ENCODE measurements at regions of chr5 and their contacts with region 1.

Region 1: GRCh38 chr5:127785098-127785927 is 82.1 kb downstream of the CCDC192 start:
- DNase-seq: peak; percentile 46
- H3K4me3 Mint-ChIP-seq: no peak overlapping the region
- H3K27ac Mint-ChIP-seq: peak overlapping the region; percentile 87
- H3K4me1 Mint-ChIP-seq: peaks cover 19% of the 10 kb centered on the region
- H3K27me3 Mint-ChIP-seq: peaks cover 12% of the 10 kb centered on the region

Region 2: DNA sequence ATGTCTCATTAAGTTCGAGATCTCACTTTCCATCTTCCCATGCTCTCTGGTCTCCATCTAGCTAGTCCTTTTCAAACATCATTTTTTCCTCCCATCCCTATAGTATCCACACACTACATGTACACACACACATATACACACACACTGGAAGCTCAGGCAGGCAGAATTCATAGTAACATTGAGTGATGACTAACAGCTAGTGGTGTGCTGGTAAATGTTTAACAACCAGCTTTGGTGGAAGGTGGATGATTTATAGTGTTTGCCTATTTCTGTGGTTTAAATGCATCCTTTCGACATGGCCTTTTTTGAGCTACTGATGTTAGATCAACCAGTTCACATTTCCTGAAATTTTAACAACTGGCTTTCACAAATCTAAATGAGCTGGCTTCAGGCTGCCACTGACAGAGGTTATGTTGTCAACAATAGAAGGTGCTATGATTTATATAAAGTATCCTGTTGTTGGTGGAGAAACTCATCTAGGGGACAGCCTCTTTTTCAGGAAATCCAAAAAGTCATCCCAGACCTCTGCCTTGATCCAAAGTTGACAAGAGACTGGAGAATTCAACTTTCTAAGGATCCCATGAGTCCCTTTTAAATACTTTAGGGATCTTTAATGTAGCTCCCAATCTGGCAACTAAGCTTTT is 35.7 kb after region 1 on chr5:
- CTCF ChIA-PET with region 1: no interaction called
- POLR2A ChIA-PET with region 1: no interaction called
- intact Hi-C with region 1: loop called (anchors 1 kb)
- DNase-seq: no peak
- H3K4me3 Mint-ChIP-seq: no peak overlapping the region
- H3K27ac Mint-ChIP-seq: no peak overlapping the region
- H3K4me1 Mint-ChIP-seq: no peaks in the 10 kb centered on the region
- H3K27me3 Mint-ChIP-seq: peaks cover 3% of the 10 kb centered on the region

Region 3: GRCh38 chr5:127898551-127899213 is 113.4 kb after region 1 on chr5:
- CTCF ChIA-PET with region 1: no interaction called
- POLR2A ChIA-PET with region 1: interaction called, 3 read pairs
- intact Hi-C with region 1: loop called (anchors 1 kb)
- DNase-seq: peak; percentile 56
- H3K4me3 Mint-ChIP-seq: no peak overlapping the region
- H3K27ac Mint-ChIP-seq: no peak overlapping the region
- H3K4me1 Mint-ChIP-seq: peaks cover 6% of the 10 kb centered on the region
- H3K27me3 Mint-ChIP-seq: peaks cover 2% of the 10 kb centered on the region